ENCODE measurements at regions of chr2 and their contacts with region 1.

Region 1: DNA sequence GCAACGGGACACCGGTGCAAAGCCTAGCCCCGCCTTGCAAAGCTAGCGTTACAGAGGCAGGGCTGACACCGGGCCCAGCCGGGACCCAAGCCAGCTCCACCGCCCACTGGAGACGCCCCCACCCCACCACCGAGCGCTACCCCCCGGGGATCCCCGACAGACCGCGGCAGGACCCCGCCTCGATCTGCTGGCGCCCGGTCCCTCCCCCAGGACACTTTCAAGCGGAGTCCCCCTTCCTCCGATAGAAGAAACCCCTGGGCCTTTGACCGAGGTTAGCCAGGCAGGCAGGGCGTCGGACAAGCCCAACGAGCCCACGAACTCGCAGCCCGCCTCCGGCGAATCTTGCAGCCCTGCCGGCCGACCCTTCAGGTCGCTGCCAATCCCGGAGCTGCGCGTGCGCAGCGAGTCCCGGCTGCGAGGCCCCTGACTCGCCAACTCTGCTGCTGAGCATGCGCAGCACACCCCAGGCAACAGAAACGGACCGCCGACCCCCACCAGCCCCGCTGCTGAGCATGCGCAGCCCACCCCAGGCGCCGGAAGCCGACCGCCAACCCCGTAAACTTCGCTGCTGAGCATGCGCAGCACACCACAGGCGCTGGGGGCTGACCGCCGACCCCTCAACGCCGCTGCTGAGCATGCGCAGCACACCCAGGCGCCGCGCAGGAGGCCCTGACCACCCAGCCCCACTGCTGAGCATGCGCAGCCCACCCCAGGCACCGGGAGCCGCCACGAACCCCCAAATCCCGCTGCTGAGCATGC is 656 bp downstream of the ADI1 start:
- DNase-seq: peak; percentile 98
- H3K4me3 ChIP-seq: peak overlapping the region; percentile 81
- H3K27ac ChIP-seq: peak overlapping the region; percentile 99
- H3K4me1 ChIP-seq: peaks cover 9% of the 10 kb centered on the region
- H3K27me3 ChIP-seq: no peaks in the 10 kb centered on the region
- CTCF ChIP-seq: no peak

Region 2: DNA sequence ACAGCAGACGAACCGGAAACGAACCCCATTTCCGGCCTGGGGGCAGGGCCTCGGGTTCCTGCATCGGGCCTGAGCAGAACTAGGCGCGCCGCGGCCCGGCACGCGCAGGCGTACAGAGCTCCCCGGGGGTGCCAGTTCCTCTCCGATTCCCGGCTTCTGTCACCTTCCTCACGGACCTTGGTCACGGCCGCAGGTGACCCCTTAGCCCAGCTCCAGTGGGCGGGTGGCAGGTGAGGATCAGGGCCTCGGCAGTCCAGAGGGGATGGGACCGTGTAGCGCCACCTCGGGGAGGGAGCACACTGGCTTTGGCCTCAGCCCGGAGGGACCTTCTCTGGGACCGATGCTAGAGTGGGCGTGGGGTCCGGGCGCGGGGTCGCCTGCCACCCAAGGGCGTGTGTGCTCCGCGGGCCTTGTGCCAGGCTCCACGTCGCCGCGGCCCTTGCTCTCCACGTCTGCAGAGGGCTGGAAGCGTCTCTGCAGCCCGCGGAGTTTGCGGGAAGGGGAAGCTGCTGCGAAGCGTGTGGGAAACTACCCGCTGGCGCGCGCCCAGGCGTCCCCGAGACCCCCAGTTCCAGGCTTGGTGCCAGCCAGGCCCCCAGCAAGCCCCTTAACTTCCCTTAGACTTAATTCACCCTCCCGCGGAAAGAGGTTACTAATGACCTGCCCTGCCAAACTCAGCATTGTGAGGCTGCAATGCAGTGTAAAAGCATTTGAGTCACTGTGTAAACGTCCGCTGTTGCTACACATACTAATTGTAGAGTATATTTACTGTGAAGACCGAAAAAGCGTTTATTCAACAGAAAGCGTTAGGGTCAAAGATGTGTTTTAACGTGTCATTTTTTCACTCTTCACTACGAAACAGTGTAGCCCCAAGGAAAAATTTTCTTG is 138.8 kb before region 1 on chr2 and contains the start of gene TRAPPC12:
- CTCF ChIA-PET with region 1: no interaction called
- POLR2A ChIA-PET with region 1: no interaction called
- intact Hi-C with region 1: loop called (anchors 5 kb)
- DNase-seq: peak; percentile 95
- H3K4me3 ChIP-seq: peak within 1 kb of the TSS; percentile 88
- H3K27ac ChIP-seq: peak within 1 kb of the TSS; percentile 86
- H3K4me1 ChIP-seq: peaks cover 17% of the 10 kb centered on the region
- H3K27me3 ChIP-seq: no peaks in the 10 kb centered on the region
- CTCF ChIP-seq: peak; percentile 57
- total RNA-seq, gene TRAPPC12: 91.1 and 94.4 TPM in 2 replicates

Measured in A673 (cell line).